Mammary epithelial cell (primary cell): ENCODE measurements at regions of chr16 and their contacts with region 1.

Region 1: DNA sequence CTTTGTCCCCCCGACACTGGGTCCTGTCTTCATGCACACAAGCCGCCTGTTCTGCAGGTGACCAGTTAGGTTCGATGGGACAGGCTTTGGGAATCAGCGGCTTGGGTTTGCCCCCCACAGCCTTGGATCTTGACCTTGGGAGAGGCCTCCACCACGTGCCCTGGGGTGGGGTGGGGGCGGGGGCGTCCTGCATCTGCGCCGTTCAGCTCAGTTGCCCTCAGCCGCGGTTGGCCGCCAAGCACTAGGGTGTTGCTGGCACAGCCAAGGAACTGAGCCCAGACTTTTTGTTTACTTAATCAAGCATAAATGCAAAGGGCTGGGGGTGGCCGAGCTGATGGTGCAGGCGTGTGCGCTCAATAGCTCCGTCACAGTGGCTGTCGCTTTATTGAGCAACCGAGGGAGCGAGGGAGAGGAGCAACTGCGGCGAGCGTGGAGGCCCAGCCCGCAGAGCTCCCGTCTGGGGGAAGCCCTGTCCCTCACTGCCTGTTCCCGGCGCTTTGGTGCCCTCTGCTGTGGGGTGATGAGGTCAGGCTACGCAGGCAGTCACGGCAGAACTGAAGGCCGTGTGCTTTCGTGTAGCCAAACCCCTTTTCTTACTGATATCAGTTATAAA is 33.9 kb downstream of the JPH3 start:
- DNase-seq: peak; percentile 69
- H3K4me3 ChIP-seq: no peak overlapping the region
- H3K27ac ChIP-seq: no peak overlapping the region
- H3K4me1 ChIP-seq: peaks cover 8% of the 10 kb centered on the region
- H3K27me3 ChIP-seq: peaks cover 3% of the 10 kb centered on the region
- CTCF ChIP-seq: peak; percentile 62 to 82

Region 2: GRCh38 chr16:87316923-87317749 is 319.0 kb before region 1 on chr16 and contains the start of gene C16orf95:
- CTCF ChIA-PET with region 1: no interaction called
- dilution Hi-C with region 1: no loop called
- in situ Hi-C with region 1: no loop called
- intact Hi-C with region 1: loop called (anchors 5 kb)
- DNase-seq: peak; percentile 92
- H3K4me3 ChIP-seq: peak within 1 kb of the TSS; percentile 91 to 92 (median 92)
- H3K27ac ChIP-seq: peak within 1 kb of the TSS; percentile 92
- H3K4me1 ChIP-seq: peaks cover 16% of the 10 kb centered on the region
- H3K27me3 ChIP-seq: no peaks in the 10 kb centered on the region
- CTCF ChIP-seq: peak; percentile 57 to 74
- total RNA-seq, gene C16orf95: 3.5 to 5.9 TPM

Region 3: DNA sequence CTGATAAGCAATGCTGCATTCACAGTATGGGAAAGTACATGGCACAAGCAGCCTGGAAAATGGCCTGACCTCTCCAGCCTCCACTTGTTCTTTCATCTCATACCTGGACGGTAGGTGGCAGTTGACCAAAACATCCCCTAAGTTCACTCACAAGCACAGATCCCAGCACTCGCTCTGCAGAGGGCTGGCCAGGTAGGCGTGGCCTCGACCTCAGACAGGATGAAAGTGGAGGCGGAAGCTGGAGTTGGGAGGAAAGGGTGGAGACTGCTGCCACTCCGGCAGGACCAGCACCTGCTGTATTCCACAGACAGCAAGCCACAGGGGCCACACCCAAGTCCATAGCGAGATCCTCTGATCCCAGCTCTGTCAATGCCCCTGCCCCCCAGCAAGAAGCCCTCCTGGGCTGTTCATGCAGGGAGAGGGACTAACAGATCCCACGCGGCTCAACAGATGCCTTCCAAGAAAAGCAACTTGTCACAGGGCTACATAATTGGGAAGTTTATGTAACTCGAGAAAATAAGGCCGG is 174.6 kb before region 1 on chr16:
- CTCF ChIA-PET with region 1: no interaction called
- dilution Hi-C with region 1: no loop called
- in situ Hi-C with region 1: no loop called
- intact Hi-C with region 1: loop called (anchors 1 kb)
- DNase-seq: peak; percentile 93
- H3K4me3 ChIP-seq: peak overlapping the region; percentile 16 to 47 (median 29)
- H3K27ac ChIP-seq: no peak overlapping the region
- H3K4me1 ChIP-seq: peaks cover 45% of the 10 kb centered on the region
- H3K27me3 ChIP-seq: no peaks in the 10 kb centered on the region
- CTCF ChIP-seq: peak; percentile 63 to 76

Region 4: DNA sequence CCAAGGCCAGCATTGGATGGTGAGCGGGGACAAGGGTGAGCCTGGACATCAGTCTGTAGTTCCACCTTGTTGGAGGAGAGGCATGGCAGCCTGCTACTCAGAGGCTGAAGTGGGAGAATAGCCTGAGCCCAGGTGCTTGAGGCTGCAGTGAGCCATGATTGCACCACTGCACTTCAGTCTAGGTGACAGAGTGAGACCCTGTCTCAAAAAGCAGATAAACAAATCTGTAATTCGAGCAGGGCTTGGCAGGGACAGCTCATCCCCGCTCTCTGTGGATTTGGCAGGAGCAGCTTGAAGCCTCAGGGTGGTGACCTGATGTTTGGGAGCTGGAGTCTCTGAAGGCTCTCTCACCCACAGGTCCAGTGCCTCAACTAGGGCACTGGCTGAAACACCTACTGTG is 104.8 kb before region 1 on chr16:
- CTCF ChIA-PET with region 1: no interaction called
- dilution Hi-C with region 1: no loop called
- in situ Hi-C with region 1: no loop called
- intact Hi-C with region 1: no loop called
- DNase-seq: no peak
- H3K4me3 ChIP-seq: no peak overlapping the region
- H3K27ac ChIP-seq: no peak overlapping the region
- H3K4me1 ChIP-seq: no peaks in the 10 kb centered on the region
- H3K27me3 ChIP-seq: no peaks in the 10 kb centered on the region
- CTCF ChIP-seq: no peak

Region 5: DNA sequence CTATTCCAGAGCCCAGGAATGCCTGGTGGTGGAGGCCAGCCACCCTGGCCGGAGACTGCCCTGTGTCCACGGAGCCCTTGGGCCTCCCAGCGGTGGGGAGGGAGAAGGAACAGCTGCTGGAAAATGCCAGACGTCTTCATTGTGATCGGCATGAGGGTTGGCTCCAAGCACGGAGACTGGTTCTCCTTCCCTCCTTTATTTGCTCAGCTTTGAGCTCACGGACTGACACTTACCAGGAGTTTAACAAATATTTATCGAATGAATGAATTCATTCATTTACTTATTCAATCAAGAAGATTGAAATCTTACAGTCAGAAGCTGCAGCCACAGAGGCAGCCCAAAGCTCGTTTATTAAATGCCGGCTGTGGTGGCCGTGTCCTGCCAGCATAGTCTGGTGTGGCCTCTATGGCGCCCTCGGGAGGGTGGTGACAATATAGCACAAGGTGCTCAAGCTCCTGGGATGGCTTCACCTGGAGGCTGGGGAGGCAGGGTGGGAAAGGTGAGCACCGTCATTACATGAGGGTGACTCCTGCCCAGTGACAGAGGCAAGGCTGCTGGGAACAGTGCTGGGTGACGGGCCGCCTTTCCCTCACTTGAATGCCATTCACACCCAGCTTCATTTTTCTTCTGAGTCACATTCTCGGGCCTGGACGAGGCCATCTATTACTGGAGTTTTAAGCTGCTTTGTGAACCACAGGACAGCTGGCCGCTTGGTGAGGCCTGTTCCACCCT is 64.9 kb before region 1 on chr16:
- CTCF ChIA-PET with region 1: no interaction called
- dilution Hi-C with region 1: no loop called
- in situ Hi-C with region 1: no loop called
- intact Hi-C with region 1: no loop called
- DNase-seq: no peak
- H3K4me3 ChIP-seq: no peak overlapping the region
- H3K27ac ChIP-seq: no peak overlapping the region
- H3K4me1 ChIP-seq: no peaks in the 10 kb centered on the region
- H3K27me3 ChIP-seq: peaks cover 5% of the 10 kb centered on the region
- CTCF ChIP-seq: peak in 1 of 2 donors; percentile 60

Region 6: GRCh38 chr16:87581833-87582203 is 54.4 kb before region 1 on chr16:
- CTCF ChIA-PET with region 1: interaction called, 6 read pairs
- dilution Hi-C with region 1: no loop called
- in situ Hi-C with region 1: loop called in 1 of 2 experiments (anchors 5 kb)
- intact Hi-C with region 1: no loop called
- DNase-seq: peak; percentile 79
- H3K4me3 ChIP-seq: no peak overlapping the region
- H3K27ac ChIP-seq: no peak overlapping the region
- H3K4me1 ChIP-seq: peaks cover 8% of the 10 kb centered on the region
- H3K27me3 ChIP-seq: peaks cover 3% of the 10 kb centered on the region
- CTCF ChIP-seq: no peak

Region 7: DNA sequence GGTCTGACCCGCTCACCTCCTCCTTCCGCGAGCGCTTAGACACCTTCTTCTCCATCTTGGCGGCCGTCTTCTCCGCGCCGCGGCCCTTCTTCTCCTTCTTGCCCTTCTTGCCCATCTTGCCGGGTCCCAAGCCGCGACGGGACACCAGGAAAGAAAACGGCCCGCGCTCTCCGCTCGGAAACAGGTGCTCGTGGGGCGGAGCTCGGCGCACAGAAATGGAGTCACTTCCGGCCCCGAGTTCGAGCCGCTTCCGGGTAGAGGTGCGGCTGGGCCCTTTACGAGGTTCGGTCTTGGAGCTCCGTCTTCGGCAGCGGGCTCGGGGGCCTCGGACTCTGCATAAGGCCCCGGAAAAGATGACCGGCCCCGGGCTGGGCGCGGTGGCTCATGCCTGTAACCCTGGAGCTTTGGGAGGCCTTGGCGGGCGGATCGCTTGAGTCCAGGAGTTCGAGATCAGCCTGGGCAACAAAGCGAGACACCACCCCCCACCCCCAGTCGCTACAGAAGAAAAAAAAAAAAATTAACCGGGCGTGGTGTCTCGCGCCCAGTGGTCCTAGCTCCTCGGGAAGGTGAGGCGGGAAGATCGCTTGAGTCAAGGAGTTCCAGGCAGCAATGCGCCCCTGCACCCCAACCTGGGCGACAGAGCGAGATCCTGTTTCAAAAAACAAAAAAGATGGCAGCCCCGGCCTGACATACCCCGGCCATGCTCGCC is 129.8 kb after region 1 on chr16 and contains the start of gene KLHDC4:
- CTCF ChIA-PET with region 1: no interaction called
- dilution Hi-C with region 1: no loop called
- in situ Hi-C with region 1: no loop called
- intact Hi-C with region 1: loop called (anchors 5 kb)
- DNase-seq: peak; percentile 82
- H3K4me3 ChIP-seq: peak within 1 kb of the TSS; percentile 94 to 96 (median 95)
- H3K27ac ChIP-seq: peak within 1 kb of the TSS; percentile 88
- H3K4me1 ChIP-seq: peaks cover 10% of the 10 kb centered on the region
- H3K27me3 ChIP-seq: no peaks in the 10 kb centered on the region
- CTCF ChIP-seq: no peak
- total RNA-seq, gene KLHDC4: 21.7 to 39.0 TPM